Esophagus muscularis mucosa (tissue), 4 donors: ENCODE measurements at regions of chr1 and their contacts with region 1.

Region 1: GRCh38 chr1:47569681-47570470 is 132.0 kb downstream of the FOXD2 start:
- DNase-seq: no peak
- H3K4me3 ChIP-seq: no peak overlapping the region
- H3K27ac ChIP-seq: no peak overlapping the region
- H3K4me1 ChIP-seq: peaks cover 6 to 8% (median 6%) of the 10 kb centered on the region in 4 donors
- H3K27me3 ChIP-seq: peaks cover 0 to 61% (median 0%) of the 10 kb centered on the region in 4 donors
- CTCF ChIP-seq: peak; percentile 30 to 51 (median 35)
- EP300 ChIP-seq: no peak
- POLR2A ChIP-seq: no peak

Region 2: DNA sequence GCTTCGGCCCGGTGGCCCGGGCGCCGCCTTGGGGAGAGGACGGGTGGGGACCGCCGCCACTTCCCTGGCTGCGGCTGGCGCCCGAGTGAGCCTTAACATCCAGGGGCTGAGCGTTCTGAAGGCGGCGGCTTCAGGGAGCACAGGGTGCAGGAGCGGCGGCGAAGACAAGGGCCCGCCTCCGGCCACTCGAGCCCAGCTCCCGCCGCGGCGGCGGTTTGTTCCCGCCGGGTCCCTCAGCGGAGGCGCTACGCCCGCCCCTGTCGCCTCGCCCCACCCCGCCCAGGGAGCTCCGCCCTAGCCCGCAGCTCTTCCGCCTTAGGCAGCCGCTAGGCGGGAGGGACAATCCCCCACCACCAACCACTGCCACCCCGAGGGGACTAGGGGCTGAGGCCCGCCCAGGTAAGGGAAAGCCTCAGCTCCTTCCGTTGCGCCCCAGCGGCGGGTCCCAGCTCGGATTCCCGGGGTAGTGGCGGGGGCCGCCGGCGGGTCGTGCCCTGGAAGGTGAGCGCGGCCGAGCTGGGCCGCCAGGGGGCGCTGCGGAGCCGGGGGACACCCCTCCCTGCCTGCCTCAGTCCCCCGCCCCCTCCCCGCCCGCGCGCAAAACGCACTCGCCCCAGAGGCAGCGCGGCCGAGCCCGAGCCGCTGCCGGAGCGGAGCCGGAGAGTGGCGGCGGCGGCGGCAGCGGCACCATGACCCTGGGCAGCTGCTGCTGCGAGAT is 132.3 kb before region 1 on chr1 and contains the start of gene FOXD2:
- intact Hi-C with region 1: loop called (anchors 5 kb)
- DNase-seq: peak; percentile 94
- H3K4me3 ChIP-seq: peak within 1 kb of the TSS; percentile 65 to 78 (median 66)
- H3K27ac ChIP-seq: peak within 1 kb of the TSS; percentile 71 to 78 (median 73)
- H3K4me1 ChIP-seq: peaks cover 35 to 61% (median 59%) of the 10 kb centered on the region in 4 donors
- H3K27me3 ChIP-seq: peaks cover 12 to 97% (median 75%) of the 10 kb centered on the region in 4 donors
- CTCF ChIP-seq: peak; percentile 93 to 97 (median 94)
- EP300 ChIP-seq: no peak
- POLR2A ChIP-seq: no peak
- total RNA-seq, gene FOXD2: under 0.01 to 0.57 (median 0.19) TPM in 3 of 4 donors, not detected in the other

Region 3: DNA sequence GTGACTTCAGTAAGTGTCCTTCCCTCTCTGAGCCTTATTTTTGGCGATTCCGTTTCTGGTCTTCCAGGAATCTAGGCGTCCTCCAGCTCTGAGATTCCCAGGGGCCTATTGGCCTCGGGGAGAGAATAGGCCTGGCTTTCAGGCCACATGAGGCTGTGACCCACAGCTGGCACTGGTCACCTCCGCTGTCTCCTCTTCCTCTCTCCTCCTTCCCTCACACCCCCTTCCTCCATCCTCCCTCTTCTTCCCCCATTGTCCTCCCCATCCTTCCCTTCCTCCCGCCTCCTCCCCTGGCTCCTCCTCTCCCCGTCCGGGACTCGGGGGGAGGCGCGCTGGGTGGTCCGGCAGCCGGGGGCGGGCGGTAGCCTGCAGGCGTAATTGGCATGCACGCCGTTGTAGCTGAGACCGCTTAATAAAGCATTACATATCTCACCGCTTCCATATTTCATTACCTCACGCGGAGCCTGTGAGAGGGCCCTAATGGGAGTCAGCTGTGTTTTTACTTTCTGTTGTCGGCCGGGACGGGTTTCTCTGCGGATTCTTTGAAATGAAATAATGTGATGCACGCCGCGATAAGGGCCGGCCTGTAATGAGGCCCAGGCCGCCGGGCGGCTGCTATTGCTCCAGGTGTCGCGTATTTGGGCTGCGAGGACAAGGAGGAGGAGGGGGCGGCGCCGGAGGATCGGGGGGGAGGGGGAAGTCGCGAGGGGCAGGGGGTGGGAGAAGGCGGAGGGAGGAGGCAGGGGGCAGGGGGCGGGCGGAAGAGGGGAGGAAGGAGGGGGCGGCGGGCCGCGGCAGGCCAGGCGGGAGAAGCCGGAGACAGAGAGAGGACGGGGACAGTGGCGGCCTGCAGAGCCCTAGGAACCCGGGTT is 36.7 kb before region 1 on chr1:
- intact Hi-C with region 1: loop called (anchors 5 kb)
- DNase-seq: no peak
- H3K4me3 ChIP-seq: peak overlapping the region; percentile 50 to 63 (median 56)
- H3K27ac ChIP-seq: peak overlapping the region; percentile 17 to 37 (median 34)
- H3K4me1 ChIP-seq: peaks cover 19 to 23% (median 21%) of the 10 kb centered on the region in 4 donors
- H3K27me3 ChIP-seq: peaks cover 0 to 35% (median 0%) of the 10 kb centered on the region in 4 donors
- CTCF ChIP-seq: no peak
- EP300 ChIP-seq: no peak
- POLR2A ChIP-seq: no peak